Transverse colon (tissue), 4 donors: ENCODE measurements at regions of chr13 and their contacts with region 1.

Region 1: GRCh38 chr13:33531484-33531883 is 245.9 kb upstream of the STARD13 start:
- DNase-seq: no peak
- H3K4me3 ChIP-seq: no peak overlapping the region
- H3K27ac ChIP-seq: no peak overlapping the region
- H3K4me1 ChIP-seq: peaks cover 0 to 15% (median 2%) of the 10 kb centered on the region in 4 donors
- H3K27me3 ChIP-seq: no peaks in the 10 kb centered on the region
- CTCF ChIP-seq: no peak
- EP300 ChIP-seq: no peak
- POLR2A ChIP-seq: no peak

Region 2: GRCh38 chr13:33515146-33515545 is 16.3 kb before region 1 on chr13:
- in situ Hi-C with region 1: no loop called
- intact Hi-C with region 1: loop called (anchors 1 kb)
- DNase-seq: no peak
- H3K4me3 ChIP-seq: no peak overlapping the region
- H3K27ac ChIP-seq: no peak overlapping the region
- H3K4me1 ChIP-seq: peaks cover 0 to 4% (median 0%) of the 10 kb centered on the region in 4 donors
- H3K27me3 ChIP-seq: no peaks in the 10 kb centered on the region
- CTCF ChIP-seq: no peak
- EP300 ChIP-seq: no peak
- POLR2A ChIP-seq: no peak